Psoas muscle (tissue), 8 donors: ENCODE measurements at regions of chr15 and their contacts with region 1.

Region 1: DNA sequence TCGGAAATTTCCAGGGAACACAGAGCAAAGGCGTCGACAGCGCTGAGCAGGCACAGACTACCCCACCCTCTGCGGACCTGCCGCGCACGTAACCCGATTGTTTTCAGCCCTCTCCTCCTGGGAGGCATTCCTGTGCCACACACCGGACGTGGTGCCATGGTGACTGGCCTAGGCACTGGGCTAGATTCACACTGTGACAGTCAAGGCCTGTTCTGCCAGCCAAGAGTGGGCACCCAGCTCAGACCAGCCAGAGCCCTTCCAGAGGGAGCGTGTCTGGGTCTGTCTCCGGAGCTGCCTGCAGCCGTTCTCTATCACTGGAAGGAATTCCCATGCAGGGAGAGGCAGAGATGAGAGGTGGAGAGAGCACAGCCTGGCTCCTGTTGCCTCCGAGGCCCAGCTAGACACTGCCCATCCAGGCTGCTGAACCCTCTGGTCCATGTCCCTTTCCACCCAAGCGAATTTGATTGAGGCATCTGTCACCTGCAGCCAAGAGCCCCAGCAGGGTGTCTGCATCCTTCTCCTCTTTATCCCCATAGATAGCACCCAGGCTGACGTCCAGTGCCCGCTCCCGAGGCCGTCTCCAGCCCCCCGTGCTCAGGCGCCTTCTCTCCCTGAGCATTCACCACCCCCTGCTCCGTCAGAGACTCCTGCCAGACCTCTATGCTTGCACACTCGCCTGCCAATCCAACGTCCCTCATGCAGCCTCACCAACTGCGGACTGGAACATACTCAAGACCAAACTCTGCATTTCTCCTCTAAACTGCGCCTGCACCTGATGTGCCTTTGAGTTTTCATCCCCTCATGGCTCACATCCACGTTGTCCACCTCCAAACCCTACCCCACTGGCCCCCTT is 267.5 kb downstream of the OCA2 start:
- DNase-seq: peak in 1 of 2 donors; percentile 17
- ATAC-seq: no peak
- H3K4me3 ChIP-seq: no peak overlapping the region
- H3K27ac ChIP-seq: no peak overlapping the region
- H3K4me1 ChIP-seq: no peaks in the 10 kb centered on the region
- H3K27me3 ChIP-seq: no peaks in the 10 kb centered on the region
- CTCF ChIP-seq: no peak

Region 2: DNA sequence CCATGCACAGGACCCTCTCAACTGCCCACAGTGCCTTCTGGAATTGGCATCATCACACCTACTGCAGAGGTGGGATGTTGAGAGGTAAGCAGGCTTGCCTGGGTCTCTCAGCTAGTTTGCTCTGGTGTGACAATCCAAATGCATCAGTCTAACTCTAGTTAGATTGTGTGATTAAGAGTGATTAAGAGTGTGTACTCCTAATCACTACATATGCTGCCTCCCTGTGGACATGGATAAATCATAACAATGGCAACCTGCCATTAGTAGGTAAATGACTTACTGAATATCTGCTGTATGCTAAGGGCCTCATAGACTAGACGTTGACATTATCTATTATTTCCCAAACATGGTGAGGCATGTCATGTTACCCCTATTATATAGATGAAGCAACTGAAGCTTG is 74.6 kb before region 1 on chr15:
- intact Hi-C with region 1: no loop called
- DNase-seq: no peak
- ATAC-seq: no peak
- H3K4me3 ChIP-seq: no peak overlapping the region
- H3K27ac ChIP-seq: no peak overlapping the region
- H3K4me1 ChIP-seq: no peaks in the 10 kb centered on the region
- H3K27me3 ChIP-seq: no peaks in the 10 kb centered on the region
- CTCF ChIP-seq: no peak

Region 3: GRCh38 chr15:27770086-27770607 is 61.5 kb before region 1 on chr15:
- intact Hi-C with region 1: loop called in 1 of 2 experiments (anchors 10 kb)
- DNase-seq: no peak
- ATAC-seq: no peak
- H3K4me3 ChIP-seq: no peak overlapping the region
- H3K27ac ChIP-seq: no peak overlapping the region
- H3K4me1 ChIP-seq: no peaks in the 10 kb centered on the region
- H3K27me3 ChIP-seq: no peaks in the 10 kb centered on the region
- CTCF ChIP-seq: no peak